ENCODE measurements at regions of chr1 and their contacts with region 1.

Region 1: DNA sequence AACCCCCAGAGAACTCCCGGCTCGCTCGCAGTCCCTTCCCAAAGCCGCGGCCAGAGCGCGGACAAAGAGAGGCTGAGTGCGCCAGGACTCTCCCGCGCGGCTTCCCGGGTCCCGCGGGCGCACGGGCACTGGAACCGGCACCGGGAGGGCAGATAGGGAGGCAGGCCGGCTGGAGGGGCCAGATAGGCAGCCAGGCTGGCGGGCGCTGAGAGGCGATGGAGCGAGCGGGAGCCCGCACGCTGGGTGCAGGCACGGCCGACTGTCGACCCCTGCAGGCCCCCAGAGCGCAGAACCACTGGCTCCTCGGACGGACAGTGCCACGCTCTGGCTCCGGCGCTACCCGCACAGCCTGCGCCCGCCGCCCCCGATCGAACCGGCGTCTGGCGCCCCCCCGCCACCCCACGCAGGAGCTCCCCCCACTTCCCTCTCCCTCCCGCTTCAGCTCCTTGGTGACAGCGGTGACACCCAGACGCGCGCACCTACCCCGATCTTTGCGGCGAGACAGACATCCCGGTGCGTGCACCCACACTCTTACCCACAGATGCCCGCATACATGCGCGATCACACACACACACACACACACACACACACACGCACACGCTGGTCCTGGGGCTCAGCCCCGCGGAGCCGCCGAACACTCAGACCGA is 534 bp downstream of the SLC6A9 start:
- DNase-seq: no peak
- ATAC-seq: peak; percentile 23
- H3K4me3 ChIP-seq: peak overlapping the region; percentile 91
- H3K27ac ChIP-seq: peak overlapping the region; percentile 98
- H3K4me1 ChIP-seq: peaks cover 48% of the 10 kb centered on the region
- H3K27me3 ChIP-seq: no peaks in the 10 kb centered on the region
- CTCF ChIP-seq: peak; percentile 23

Region 2: DNA sequence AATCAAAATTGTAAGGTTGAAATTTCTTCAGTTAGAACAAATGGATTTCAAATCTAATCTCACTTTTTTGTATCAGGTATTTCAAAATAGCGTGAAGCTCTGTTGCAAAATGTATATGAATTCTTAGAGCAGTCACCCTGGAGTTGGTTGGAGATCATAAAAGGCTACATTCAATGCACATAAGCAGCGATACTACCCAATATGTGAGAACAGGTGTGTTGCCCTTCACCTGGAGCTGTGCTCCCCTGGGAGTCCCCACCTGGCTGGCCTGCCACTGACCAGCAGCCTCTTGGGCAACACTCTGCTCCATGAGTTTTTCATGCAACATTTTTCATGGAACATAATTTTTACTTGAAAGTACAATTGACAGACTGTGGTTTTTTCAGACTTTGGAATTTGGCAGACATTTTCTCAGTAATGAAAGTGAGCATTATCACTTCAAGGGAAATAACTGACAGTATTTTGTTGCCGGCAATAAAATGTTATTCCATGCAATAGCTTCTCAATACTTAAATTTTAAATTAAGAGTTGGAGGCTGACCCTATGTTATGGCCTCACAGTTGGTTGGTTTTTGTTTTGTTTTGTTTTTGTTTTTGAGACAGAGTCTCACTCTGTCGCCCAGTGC is 228.3 kb before region 1 on chr1:
- CTCF ChIA-PET with region 1: no interaction called
- POLR2A ChIA-PET with region 1: interaction called, 17 read pairs
- intact Hi-C with region 1: no loop called
- DNase-seq: no peak
- ATAC-seq: no peak
- H3K4me3 ChIP-seq: no peak overlapping the region
- H3K27ac ChIP-seq: no peak overlapping the region
- H3K4me1 ChIP-seq: no peaks in the 10 kb centered on the region
- H3K27me3 ChIP-seq: no peaks in the 10 kb centered on the region
- CTCF ChIP-seq: no peak

Region 3: DNA sequence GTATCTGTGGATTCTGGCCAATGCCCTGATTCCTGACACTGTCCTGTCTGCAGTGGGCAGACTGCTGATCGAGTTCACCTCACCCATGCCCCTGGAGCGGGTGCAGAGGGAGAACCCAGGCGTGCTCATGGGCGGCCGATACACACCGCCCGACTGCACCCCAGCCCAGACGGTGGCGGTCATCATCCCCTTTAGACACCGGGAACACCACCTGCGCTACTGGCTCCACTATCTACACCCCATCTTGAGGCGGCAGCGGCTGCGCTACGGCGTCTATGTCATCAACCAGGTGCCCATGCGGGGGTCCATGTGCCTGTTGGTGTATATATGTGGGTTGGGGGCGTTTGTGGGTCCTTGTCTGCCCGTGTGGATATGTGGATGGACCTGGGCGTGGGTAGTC is 49.1 kb before region 1 on chr1:
- CTCF ChIA-PET with region 1: interaction called, 3 read pairs
- POLR2A ChIA-PET with region 1: interaction called, 13 read pairs
- intact Hi-C with region 1: no loop called
- DNase-seq: no peak
- ATAC-seq: no peak
- H3K4me3 ChIP-seq: no peak overlapping the region
- H3K27ac ChIP-seq: no peak overlapping the region
- H3K4me1 ChIP-seq: peaks cover 37% of the 10 kb centered on the region
- H3K27me3 ChIP-seq: no peaks in the 10 kb centered on the region
- CTCF ChIP-seq: no peak

Region 4: GRCh38 chr1:44002606-44003157 is 28.0 kb before region 1 on chr1:
- CTCF ChIA-PET with region 1: interaction called, 5 read pairs
- POLR2A ChIA-PET with region 1: no interaction called
- intact Hi-C with region 1: loop called (anchors 1 kb)
- DNase-seq: no peak
- ATAC-seq: no peak
- H3K4me3 ChIP-seq: no peak overlapping the region
- H3K27ac ChIP-seq: no peak overlapping the region
- H3K4me1 ChIP-seq: peaks cover 3% of the 10 kb centered on the region; the same call in 1 of the 2 replicates
- H3K27me3 ChIP-seq: no peaks in the 10 kb centered on the region
- CTCF ChIP-seq: peak; percentile 35

Region 5: GRCh38 chr1:44112486-44112885 is 81.8 kb after region 1 on chr1:
- CTCF ChIA-PET with region 1: no interaction called
- POLR2A ChIA-PET with region 1: interaction called, 11 read pairs
- intact Hi-C with region 1: no loop called
- DNase-seq: peak; percentile 6
- ATAC-seq: peak; percentile 27; the same call in 1 of the 2 replicates
- H3K4me3 ChIP-seq: no peak overlapping the region
- H3K27ac ChIP-seq: no peak overlapping the region
- H3K4me1 ChIP-seq: peaks cover 6% of the 10 kb centered on the region
- H3K27me3 ChIP-seq: no peaks in the 10 kb centered on the region
- CTCF ChIP-seq: no peak

Region 6: GRCh38 chr1:44154047-44154446 is 123.3 kb after region 1 on chr1:
- CTCF ChIA-PET with region 1: no interaction called
- POLR2A ChIA-PET with region 1: interaction called, 12 read pairs
- intact Hi-C with region 1: no loop called
- DNase-seq: peak; percentile 44
- ATAC-seq: peak; percentile 49
- H3K4me3 ChIP-seq: no peak overlapping the region
- H3K27ac ChIP-seq: peak overlapping the region; percentile 84
- H3K4me1 ChIP-seq: peaks cover 25% of the 10 kb centered on the region
- H3K27me3 ChIP-seq: no peaks in the 10 kb centered on the region
- CTCF ChIP-seq: no peak

Region 7: DNA sequence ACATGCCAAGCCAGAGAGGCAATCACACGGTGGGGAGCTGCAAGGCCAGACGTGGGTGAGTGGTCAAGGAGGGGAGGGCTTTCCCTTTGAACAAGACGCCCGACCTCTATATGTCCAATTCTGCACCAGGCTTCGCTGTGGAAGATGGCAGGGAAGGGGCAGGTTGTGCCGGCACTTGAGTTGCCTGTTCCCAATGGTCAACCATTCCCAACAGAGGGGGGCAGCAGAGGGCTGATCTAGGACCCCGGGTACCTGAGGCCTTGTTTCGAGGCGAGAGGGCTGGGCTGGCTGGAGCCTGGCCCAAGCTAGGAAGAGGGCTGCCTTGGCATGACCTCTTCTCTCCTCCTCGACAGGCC is 578.7 kb after region 1 on chr1:
- CTCF ChIA-PET with region 1: no interaction called
- POLR2A ChIA-PET with region 1: interaction called, 12 read pairs
- intact Hi-C with region 1: no loop called
- DNase-seq: peak; percentile 58
- ATAC-seq: no peak
- H3K4me3 ChIP-seq: no peak overlapping the region
- H3K27ac ChIP-seq: no peak overlapping the region
- H3K4me1 ChIP-seq: peaks cover 22% of the 10 kb centered on the region
- H3K27me3 ChIP-seq: no peaks in the 10 kb centered on the region
- CTCF ChIP-seq: peak; percentile 64